Activated CD4-positive, alpha-beta T cell treated with anti-CD3 and anti-CD28 coated beads for 36 hours (primary cell): ENCODE measurements at regions of chr7 and their contacts with region 1.

Region 1: GRCh38 chr7:66920769-66921395 is at the start of gene TMEM248:
- DNase-seq: peak; percentile 96
- ATAC-seq: peak; percentile 90
- H3K4me3 Mint-ChIP-seq: peak within 1 kb of the TSS; percentile 99
- H3K27ac Mint-ChIP-seq: peak within 1 kb of the TSS; percentile 98
- H3K4me1 Mint-ChIP-seq: peaks cover 33% of the 10 kb centered on the region
- H3K27me3 Mint-ChIP-seq: no peaks in the 10 kb centered on the region
- total RNA-seq, gene TMEM248: 70.5 to 85.8 TPM

Region 2: GRCh38 chr7:65037740-65038678 is 1882.9 kb before region 1 on chr7:
- CTCF ChIA-PET with region 1: no interaction called
- POLR2A ChIA-PET with region 1: no interaction called
- intact Hi-C with region 1: loop called in 1 of 2 experiments (anchors 5 kb)
- DNase-seq: peak; percentile 97
- ATAC-seq: peak; percentile 93
- H3K4me3 Mint-ChIP-seq: peak overlapping the region; percentile 82
- H3K27ac Mint-ChIP-seq: no peak overlapping the region
- H3K4me1 Mint-ChIP-seq: peaks cover 13% of the 10 kb centered on the region
- H3K27me3 Mint-ChIP-seq: no peaks in the 10 kb centered on the region

Region 3: GRCh38 chr7:66591799-66592596 is 328.9 kb before region 1 on chr7:
- CTCF ChIA-PET with region 1: no interaction called
- POLR2A ChIA-PET with region 1: no interaction called
- intact Hi-C with region 1: loop called in 1 of 2 experiments (anchors 1 kb)
- DNase-seq: peak; percentile 96
- ATAC-seq: peak; percentile 98
- H3K4me3 Mint-ChIP-seq: peak overlapping the region; percentile 94
- H3K27ac Mint-ChIP-seq: peak overlapping the region; percentile 98
- H3K4me1 Mint-ChIP-seq: peaks cover 46% of the 10 kb centered on the region
- H3K27me3 Mint-ChIP-seq: no peaks in the 10 kb centered on the region

Region 4: GRCh38 chr7:66669088-66669487 is 251.8 kb before region 1 on chr7:
- CTCF ChIA-PET with region 1: no interaction called
- POLR2A ChIA-PET with region 1: no interaction called
- intact Hi-C with region 1: no loop called
- DNase-seq: no peak
- ATAC-seq: no peak
- H3K4me3 Mint-ChIP-seq: no peak overlapping the region
- H3K27ac Mint-ChIP-seq: peak overlapping the region; percentile 64
- H3K4me1 Mint-ChIP-seq: peaks cover 12% of the 10 kb centered on the region
- H3K27me3 Mint-ChIP-seq: no peaks in the 10 kb centered on the region

Region 5: DNA sequence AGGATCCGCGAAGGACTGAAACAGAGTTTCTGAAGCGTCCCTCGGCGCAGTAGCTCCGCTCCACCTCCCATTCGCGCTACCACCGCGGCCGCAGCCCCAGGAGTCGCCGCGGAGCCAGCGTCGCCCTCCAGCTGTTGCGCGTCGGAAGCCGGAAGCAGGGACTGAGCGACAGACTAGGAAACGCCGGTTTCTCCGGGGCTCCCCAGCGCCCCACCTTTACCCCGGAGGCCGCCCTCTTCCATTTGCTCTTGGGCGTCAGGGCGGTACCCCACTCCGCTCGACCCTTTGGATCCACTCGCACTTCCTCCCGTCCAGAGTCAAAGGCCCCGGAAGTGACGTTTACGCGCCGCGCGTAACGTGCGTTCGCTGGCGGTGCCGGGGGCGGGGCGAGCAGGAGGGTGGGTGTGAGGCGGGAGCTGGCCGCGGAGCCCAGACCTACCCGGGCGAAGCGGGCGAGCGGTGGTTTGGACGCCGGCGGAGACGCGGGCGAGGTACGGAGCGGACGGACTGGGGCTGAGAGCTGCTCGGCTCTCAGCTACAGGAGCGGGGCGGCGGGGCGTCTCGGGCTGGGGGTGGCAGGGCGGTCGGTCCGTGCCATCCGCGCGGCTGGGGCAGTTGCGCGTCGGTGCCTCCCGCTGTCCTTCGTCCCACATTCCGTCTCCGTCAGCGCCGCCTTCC is 180.4 kb before region 1 on chr7 and contains the start of gene RABGEF1:
- CTCF ChIA-PET with region 1: interaction called, 3 read pairs
- POLR2A ChIA-PET with region 1: no interaction called
- intact Hi-C with region 1: loop called in 1 of 2 experiments (anchors 1 kb)
- DNase-seq: peak; percentile 98
- ATAC-seq: peak; percentile 89
- H3K4me3 Mint-ChIP-seq: peak within 1 kb of the TSS; percentile 98
- H3K27ac Mint-ChIP-seq: peak within 1 kb of the TSS; percentile 91
- H3K4me1 Mint-ChIP-seq: peaks cover 34% of the 10 kb centered on the region
- H3K27me3 Mint-ChIP-seq: no peaks in the 10 kb centered on the region
- total RNA-seq, gene RABGEF1: 19.3 to 22.5 TPM

Region 6: DNA sequence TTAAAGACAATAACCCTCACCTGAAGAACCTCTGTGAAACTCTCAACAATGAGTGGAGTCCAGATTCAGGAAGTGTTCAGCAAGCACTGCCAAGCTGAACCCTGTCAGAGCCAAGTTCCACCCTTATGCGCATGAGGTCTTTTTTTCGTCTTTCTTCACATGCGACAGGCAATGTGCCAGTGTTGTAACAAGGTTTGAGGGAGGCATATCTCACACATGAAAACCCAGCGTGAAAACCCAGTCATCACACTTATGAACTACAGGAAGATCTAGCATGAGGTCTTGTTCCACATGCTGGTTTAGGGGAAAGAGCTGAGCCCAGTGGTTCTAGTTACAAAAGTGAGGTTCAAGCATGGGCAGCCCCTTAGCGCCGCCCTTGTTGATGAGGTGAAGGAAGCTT is 130.7 kb before region 1 on chr7:
- CTCF ChIA-PET with region 1: no interaction called
- POLR2A ChIA-PET with region 1: no interaction called
- intact Hi-C with region 1: no loop called
- DNase-seq: no peak
- ATAC-seq: no peak
- H3K4me3 Mint-ChIP-seq: no peak overlapping the region
- H3K27ac Mint-ChIP-seq: no peak overlapping the region
- H3K4me1 Mint-ChIP-seq: no peaks in the 10 kb centered on the region
- H3K27me3 Mint-ChIP-seq: no peaks in the 10 kb centered on the region

Region 7: GRCh38 chr7:66844552-66845378 is 76.1 kb before region 1 on chr7:
- CTCF ChIA-PET with region 1: interaction called, 12 read pairs
- POLR2A ChIA-PET with region 1: no interaction called
- intact Hi-C with region 1: loop called (anchors 1 kb)
- DNase-seq: peak; percentile 99
- ATAC-seq: peak; percentile 94
- H3K4me3 Mint-ChIP-seq: peak overlapping the region; percentile 95
- H3K27ac Mint-ChIP-seq: peak overlapping the region; percentile 99
- H3K4me1 Mint-ChIP-seq: peaks cover 24% of the 10 kb centered on the region
- H3K27me3 Mint-ChIP-seq: no peaks in the 10 kb centered on the region

Region 8: GRCh38 chr7:66933469-66933868 is 12.6 kb after region 1 on chr7:
- CTCF ChIA-PET with region 1: no interaction called
- POLR2A ChIA-PET with region 1: no interaction called
- intact Hi-C with region 1: no loop called
- DNase-seq: no peak
- ATAC-seq: no peak
- H3K4me3 Mint-ChIP-seq: no peak overlapping the region
- H3K27ac Mint-ChIP-seq: no peak overlapping the region
- H3K4me1 Mint-ChIP-seq: peaks cover 67% of the 10 kb centered on the region
- H3K27me3 Mint-ChIP-seq: no peaks in the 10 kb centered on the region

Region 9: DNA sequence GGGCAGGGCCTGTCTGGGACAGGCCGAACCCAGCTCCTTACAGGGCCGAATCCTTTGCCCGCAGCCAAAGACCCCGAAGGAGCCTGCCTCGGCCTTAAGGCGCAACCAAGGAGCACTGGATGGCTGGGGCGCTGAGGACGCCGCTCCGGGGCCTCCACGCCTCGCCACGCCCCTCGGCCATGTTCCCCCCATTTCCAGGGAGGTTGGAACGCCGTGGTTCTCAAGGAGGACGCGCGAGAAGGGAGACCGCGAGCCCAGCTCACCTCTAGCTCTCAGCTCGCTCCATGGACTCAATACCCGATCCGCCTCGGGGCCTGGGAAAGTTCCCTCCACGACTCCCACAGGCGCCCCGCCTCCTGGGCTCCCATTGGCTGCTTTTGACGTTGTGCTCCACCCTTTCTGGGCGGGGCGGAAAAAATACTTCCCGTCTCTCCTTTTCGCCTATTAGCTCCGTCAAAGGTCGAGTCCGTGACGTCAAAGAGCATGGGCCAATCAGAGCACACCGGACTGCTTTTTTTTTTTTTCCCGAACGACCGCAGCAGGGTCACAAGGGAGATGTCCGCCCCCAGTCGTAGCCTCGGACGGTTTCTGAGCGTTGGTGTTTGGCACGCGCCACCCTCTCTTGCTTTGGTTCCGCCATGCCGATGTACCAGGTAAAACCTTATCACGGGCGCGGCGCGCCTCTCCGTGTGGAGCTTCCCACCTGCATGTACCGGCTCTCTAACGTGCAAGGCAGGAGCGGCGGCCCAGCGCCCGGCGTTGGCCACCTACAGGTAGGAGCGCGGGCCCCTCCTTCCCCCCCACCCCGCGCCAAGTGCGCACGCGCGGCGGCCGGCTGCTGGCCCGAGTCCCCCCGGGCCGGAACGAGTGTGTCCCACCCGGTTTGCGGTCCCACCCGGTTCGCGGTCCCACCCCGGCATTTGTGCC is 381.5 kb after region 1 on chr7:
- CTCF ChIA-PET with region 1: interaction called, 5 read pairs
- POLR2A ChIA-PET with region 1: no interaction called
- intact Hi-C with region 1: loop called in 1 of 2 experiments (anchors 1 kb)
- DNase-seq: peak; percentile 99
- ATAC-seq: peak; percentile 88
- H3K4me3 Mint-ChIP-seq: peak overlapping the region; percentile 88
- H3K27ac Mint-ChIP-seq: peak overlapping the region; percentile 92
- H3K4me1 Mint-ChIP-seq: peaks cover 18% of the 10 kb centered on the region
- H3K27me3 Mint-ChIP-seq: no peaks in the 10 kb centered on the region

Region 10: DNA sequence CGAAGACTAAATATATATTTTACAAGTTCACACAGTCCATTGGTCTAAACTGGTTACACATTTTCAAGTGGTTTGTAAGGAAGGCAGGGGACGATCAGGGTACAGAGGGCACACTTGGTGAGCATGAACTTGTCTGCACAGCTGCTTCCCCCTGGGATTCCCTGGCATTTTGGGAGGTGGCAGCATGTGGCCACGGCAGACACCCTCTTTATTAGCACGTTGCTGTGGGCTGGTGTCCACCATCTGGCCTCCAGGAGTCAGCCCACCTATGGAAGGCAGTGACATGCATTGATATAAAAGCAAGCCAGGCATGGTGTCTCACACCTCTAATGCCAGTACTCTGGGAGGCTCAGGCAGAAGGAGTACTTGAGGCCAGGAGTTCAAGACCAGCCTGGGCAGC is 426.0 kb after region 1 on chr7:
- CTCF ChIA-PET with region 1: no interaction called
- POLR2A ChIA-PET with region 1: no interaction called
- intact Hi-C with region 1: no loop called
- DNase-seq: no peak
- ATAC-seq: no peak
- H3K4me3 Mint-ChIP-seq: no peak overlapping the region
- H3K27ac Mint-ChIP-seq: no peak overlapping the region
- H3K4me1 Mint-ChIP-seq: no peaks in the 10 kb centered on the region
- H3K27me3 Mint-ChIP-seq: no peaks in the 10 kb centered on the region